ENCODE measurements at regions of chr6 and their contacts with region 1.

Region 1: DNA sequence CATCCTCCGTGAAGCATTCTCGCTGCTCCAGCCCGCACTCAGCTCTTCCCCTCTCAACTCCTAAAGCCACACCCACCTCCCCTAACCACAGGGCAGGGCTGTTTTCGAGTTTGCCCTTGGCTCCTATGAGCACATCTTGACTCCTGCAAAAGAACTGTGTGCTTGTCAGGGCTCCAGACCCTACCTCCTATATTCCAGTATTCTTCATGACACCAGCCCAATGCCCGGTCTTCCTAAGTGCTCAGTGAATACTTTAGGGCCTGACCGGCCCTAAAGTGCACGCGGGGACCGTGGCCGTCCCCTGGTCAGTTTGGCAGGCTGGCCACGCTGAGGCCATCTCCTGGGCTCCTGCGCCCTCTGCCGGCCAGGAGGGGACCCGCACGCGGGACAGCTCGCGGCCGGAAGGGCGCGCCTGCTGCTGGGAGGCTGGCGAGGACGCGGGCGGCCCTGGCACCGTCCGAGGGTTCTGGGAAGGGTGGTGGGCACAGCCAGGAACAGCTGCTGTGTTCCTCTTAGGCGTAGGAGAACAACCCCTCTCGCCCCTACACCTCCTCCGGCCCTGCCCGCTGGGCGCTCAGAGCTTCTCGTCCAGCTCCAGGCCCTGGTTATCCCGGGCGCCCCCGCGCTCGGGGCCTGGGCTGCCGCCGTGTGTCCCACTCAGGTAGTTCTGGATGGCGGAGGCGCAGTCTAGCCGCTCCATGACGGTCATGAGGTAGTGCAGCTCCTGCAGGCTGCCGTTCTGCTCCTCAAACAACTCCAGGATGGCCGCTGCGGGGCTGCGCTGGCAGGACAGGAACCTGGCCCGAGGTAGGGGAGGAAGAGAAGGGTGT is 11.0 kb downstream of the UNC5CL start:
- DNase-seq: peak in 1 of 2 experiments; percentile 84
- H3K4me3 ChIP-seq: peak overlapping the region; percentile 47; the same call in 1 of the 2 replicates
- H3K27ac ChIP-seq: no peak overlapping the region
- H3K4me1 ChIP-seq: no peaks in the 10 kb centered on the region
- H3K27me3 ChIP-seq: no peaks in the 10 kb centered on the region; the same call in 1 of the 2 replicates
- CTCF ChIP-seq: peak; percentile 97

Region 2: DNA sequence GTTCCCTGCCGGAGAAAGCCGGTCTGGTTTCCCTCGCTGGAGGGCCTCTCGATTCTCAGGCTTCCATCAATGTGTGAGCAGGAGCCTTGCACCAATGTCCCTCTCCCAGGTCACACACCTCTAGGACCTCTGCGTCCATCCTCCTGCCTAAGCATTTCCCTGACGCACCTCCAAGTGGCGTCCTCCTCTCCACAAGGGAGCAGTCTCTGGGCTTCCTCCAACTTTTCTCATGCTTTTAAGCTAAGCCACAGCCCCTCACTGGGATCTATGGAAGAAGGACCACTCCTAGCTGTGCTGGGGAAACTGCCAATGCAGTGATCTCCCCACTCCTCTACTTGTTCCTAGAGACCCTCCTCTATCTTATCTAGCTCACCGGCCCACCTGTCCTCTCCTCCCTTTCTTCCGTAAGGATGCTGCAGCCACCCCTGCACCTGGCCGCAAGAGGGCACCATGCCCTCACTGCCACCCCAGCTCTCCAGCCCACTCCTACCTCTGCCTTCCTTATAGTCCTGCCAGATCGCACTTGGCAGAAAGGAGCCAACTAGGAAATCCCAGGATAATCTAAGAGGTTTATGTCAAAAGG is 699.5 kb before region 1 on chr6:
- CTCF ChIA-PET with region 1: interaction called, 3 read pairs
- POLR2A ChIA-PET with region 1: no interaction called
- intact Hi-C with region 1: loop called (anchors 1 kb)
- DNase-seq: peak in 1 of 2 experiments; percentile 51
- H3K4me3 ChIP-seq: no peak overlapping the region
- H3K27ac ChIP-seq: no peak overlapping the region
- H3K4me1 ChIP-seq: no peaks in the 10 kb centered on the region
- H3K27me3 ChIP-seq: peaks cover 21% of the 10 kb centered on the region
- CTCF ChIP-seq: peak; percentile 77

Region 3: DNA sequence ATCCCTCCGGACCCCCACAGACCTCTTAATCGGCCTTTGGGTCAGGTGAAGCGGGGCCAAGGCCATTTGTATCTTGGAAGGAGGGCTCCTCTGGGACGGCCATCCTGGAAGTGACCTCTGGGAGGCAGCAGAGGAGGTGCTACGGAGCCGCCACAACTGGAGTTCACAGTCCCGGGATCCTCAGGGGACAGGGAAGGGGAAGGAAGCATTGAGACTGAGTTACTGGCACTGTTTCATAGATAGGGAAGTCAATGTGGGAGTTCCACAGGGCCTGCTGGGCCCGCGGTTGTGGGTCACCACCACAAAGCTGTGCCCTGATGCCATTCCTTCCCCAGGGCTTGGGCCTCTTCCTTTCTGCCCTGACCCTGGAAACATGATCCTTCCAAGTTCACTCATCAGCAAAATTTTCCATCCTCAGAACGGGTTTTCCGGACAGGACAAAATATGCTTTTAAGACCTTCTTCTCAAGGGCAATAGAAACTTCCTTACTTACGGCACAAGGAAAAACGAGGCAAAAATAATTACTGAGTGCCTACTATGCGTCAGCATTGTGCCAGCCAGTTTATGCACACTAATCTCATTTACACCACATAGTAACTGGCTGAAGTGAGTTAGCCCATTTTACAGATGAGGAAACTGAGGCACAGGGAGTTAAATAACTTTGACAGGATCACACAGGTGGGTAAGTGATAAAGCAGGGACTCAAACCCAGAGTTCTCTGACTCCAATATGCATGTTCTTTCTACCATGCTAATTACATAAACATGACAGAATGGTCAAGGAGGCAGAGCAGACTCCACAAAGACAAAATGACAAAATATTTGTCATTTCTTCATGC is 132.8 kb before region 1 on chr6:
- CTCF ChIA-PET with region 1: interaction called, 3 read pairs
- POLR2A ChIA-PET with region 1: interaction called, 5 read pairs
- intact Hi-C with region 1: loop called (anchors 1 kb)
- DNase-seq: peak in 1 of 2 experiments; percentile 58
- H3K4me3 ChIP-seq: no peak overlapping the region
- H3K27ac ChIP-seq: no peak overlapping the region
- H3K4me1 ChIP-seq: no peaks in the 10 kb centered on the region
- H3K27me3 ChIP-seq: peaks cover 44% of the 10 kb centered on the region
- CTCF ChIP-seq: peak; percentile 74

Region 4: DNA sequence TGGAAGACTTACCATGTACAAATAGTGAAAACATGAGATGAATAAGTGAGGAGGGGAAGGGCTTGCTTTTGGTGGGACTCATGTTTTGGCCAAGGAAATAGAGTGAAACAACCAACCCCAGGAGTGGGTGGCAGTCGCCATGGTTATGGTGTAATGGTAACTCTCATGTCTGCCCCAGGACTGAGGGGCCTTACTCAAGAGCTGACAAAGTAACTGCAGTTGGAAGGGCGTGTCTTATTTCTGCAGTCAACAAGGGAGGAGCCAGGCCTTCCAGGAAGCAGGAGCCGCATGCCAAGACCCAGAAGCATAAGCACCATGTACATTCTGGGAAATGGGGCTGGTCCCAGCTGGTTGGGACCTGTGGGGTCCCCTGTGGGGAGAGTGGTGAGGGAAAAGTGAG is 97.5 kb before region 1 on chr6:
- CTCF ChIA-PET with region 1: no interaction called
- POLR2A ChIA-PET with region 1: no interaction called
- intact Hi-C with region 1: no loop called
- DNase-seq: no peak
- H3K4me3 ChIP-seq: no peak overlapping the region
- H3K27ac ChIP-seq: no peak overlapping the region
- H3K4me1 ChIP-seq: no peaks in the 10 kb centered on the region
- H3K27me3 ChIP-seq: peaks cover 16% of the 10 kb centered on the region
- CTCF ChIP-seq: no peak

Region 5: DNA sequence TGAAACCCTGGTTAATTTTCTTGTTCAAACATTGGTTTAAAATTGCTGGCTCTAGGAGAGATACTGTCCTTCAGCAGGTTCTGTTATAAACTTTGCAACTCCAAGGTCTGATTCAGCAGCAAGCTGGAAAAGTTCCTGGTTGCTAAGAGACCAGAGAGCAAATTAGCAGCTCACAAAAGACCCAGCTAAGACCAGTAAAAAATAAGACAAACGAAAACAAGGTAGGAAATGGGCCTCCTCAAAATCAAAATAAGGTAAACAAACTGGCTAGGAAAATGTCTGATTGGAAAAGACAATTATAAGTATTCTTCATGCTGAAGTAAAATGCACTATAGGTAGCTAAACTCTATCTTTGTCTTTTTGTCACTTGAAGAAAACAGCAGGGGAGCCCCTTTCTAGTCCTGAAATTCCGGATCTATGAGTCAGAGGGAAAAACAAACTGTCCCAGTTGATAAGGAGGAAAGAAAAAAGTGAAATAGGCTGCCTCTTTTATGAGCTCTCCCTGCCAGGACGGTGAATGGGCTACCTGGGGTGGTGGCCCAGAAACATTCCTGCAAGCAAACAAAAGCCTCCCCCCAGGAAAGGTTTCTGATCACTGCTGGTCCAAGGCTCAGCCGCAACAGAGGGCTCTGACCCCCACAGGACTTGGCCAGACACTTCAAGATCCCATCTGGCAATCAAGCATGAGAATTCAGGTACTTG is 30.6 kb before region 1 on chr6:
- CTCF ChIA-PET with region 1: interaction called, 10 read pairs
- POLR2A ChIA-PET with region 1: no interaction called
- intact Hi-C with region 1: no loop called
- DNase-seq: peak; percentile 72 to 89
- H3K4me3 ChIP-seq: no peak overlapping the region
- H3K27ac ChIP-seq: peak overlapping the region; percentile 49
- H3K4me1 ChIP-seq: peaks cover 30% of the 10 kb centered on the region
- H3K27me3 ChIP-seq: 0 out of 2 replicates have a peak, but pooled peaks cover under 1% of the 10 kb centered on the region
- CTCF ChIP-seq: no peak

Region 6: DNA sequence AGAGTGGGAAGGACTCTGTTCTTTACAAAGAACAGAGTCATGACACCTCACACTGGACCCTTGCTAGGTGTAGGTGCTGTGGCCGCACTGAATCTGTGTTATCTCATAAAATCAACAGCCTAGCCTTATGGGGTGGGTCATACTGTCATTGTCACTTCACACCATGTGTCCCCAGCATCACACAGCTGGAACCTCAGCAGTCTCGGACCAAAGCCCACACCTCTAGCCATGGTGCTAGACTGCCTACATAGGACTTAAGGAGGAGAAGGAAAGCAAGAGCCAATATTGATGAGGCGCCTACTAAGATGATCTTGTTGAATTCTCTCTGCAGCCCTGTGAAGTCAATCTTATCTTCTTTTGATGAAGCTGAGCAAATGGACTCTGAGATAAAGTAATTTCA is 20.0 kb before region 1 on chr6:
- CTCF ChIA-PET with region 1: no interaction called
- POLR2A ChIA-PET with region 1: no interaction called
- intact Hi-C with region 1: no loop called
- DNase-seq: no peak
- H3K4me3 ChIP-seq: no peak overlapping the region
- H3K27ac ChIP-seq: no peak overlapping the region
- H3K4me1 ChIP-seq: no peaks in the 10 kb centered on the region
- H3K27me3 ChIP-seq: peaks cover 13% of the 10 kb centered on the region; the same call in 1 of the 2 replicates
- CTCF ChIP-seq: no peak

Region 7: GRCh38 chr6:41039060-41039998 is 11.3 kb after region 1 on chr6 and contains the start of gene UNC5CL:
- CTCF ChIA-PET with region 1: interaction called, 9 read pairs
- POLR2A ChIA-PET with region 1: no interaction called
- intact Hi-C with region 1: loop called (anchors 1 kb)
- DNase-seq: peak; percentile 43 to 67
- H3K4me3 ChIP-seq: no peak within 1 kb of the TSS
- H3K27ac ChIP-seq: no peak within 1 kb of the TSS
- H3K4me1 ChIP-seq: peaks cover 20% of the 10 kb centered on the region
- H3K27me3 ChIP-seq: no peaks in the 10 kb centered on the region
- CTCF ChIP-seq: peak; percentile 80
- total RNA-seq, gene UNC5CL: 1.7 and 2.1 TPM in 2 replicates

Region 8: DNA sequence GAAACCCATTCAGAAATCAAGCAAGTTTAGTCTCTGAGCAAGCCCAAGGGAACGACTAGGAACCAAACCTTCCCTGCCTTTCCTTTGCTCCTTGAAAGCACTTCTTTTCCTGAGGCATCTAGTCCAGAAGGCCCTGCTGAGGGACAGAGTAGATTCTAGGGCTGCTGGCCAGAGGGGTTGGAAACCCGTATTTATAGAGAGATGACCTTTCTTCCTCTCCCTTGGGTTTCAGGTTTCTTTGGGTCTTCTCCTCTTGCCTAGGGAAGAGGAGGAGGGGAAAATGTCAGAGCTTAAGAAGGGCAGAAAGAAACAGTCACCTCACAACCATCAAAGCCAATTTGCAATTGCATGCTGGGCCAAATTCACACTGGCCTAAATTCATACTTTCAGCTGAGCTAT is 30.8 kb after region 1 on chr6:
- CTCF ChIA-PET with region 1: interaction called, 12 read pairs
- POLR2A ChIA-PET with region 1: no interaction called
- intact Hi-C with region 1: no loop called
- DNase-seq: no peak
- H3K4me3 ChIP-seq: no peak overlapping the region
- H3K27ac ChIP-seq: no peak overlapping the region
- H3K4me1 ChIP-seq: no peaks in the 10 kb centered on the region
- H3K27me3 ChIP-seq: no peaks in the 10 kb centered on the region
- CTCF ChIP-seq: no peak

Region 9: GRCh38 chr6:41066867-41067304 is 38.9 kb after region 1 on chr6:
- CTCF ChIA-PET with region 1: interaction called, 3 read pairs
- POLR2A ChIA-PET with region 1: no interaction called
- intact Hi-C with region 1: loop called (anchors 5 kb)
- DNase-seq: peak; percentile 52 to 57
- H3K4me3 ChIP-seq: no peak overlapping the region
- H3K27ac ChIP-seq: no peak overlapping the region
- H3K4me1 ChIP-seq: peaks cover 12% of the 10 kb centered on the region
- H3K27me3 ChIP-seq: no peaks in the 10 kb centered on the region
- CTCF ChIP-seq: peak; percentile 92

Measured in PC-9 (cell line).